ENCODE measurements at regions of chr19 and their contacts with region 1.

Region 1: DNA sequence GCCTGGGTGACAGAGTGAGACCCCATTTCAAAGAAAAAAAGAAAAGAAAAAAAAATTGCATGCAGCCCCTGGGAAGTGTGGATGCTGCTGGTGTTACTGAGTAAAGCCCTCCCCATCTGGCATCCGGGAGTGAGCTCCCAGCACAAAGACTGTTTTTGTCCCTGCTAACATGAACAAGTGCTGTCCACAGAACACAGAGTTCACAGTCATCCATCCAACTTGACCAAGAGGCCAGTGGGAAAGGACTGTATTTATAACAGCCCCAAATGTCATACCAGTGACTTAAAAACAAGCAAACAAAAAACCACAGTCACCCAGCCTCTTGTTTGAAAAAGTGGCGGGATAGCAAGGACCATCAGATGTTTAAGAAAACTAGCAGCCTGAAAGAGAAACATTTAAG is 10.8 kb downstream of the FBXO17 start:
- DNase-seq: no peak
- H3K4me3 ChIP-seq: no peak overlapping the region
- H3K27ac ChIP-seq: no peak overlapping the region
- H3K27me3 ChIP-seq: no peaks in the 10 kb centered on the region
- CTCF ChIP-seq: no peak

Region 2: DNA sequence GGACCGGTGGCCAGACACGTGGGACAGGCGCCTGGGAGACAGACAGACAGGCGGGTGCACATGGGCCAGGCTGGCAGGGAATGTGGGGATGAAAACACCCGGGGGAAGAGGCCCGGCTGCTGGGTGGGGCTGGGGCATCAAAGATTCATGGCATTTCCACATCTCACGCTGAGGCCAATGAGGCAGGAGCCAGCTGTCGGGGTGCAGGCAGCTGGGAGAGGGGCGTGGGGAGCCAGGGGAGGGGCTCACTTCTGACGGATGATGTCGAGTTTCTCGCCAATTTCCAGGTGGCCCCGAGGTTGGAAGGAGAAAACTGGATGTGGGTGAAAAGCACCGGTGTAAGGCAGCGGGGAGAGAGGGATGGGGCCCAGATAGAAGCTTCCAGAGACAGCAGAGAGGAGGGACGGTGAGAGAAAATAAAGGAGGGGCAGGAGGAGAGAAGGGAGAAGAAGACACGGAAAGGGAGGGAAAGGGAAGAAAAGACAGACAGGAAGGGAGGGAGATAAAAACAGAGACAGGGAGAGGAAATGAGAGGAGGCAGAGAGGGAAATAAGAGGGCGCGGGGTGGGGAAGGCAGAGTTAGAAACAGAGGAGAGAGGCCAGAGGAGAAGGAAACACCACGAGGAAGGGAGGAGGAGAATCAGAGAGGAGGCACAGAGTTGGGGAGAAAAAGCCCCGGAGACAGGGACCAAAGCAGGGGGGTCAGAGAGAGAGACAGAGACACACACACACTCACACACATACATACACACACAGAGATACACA is 44.7 kb before region 1 on chr19:
- CTCF ChIA-PET with region 1: no interaction called
- POLR2A ChIA-PET with region 1: no interaction called
- DNase-seq: no peak
- H3K4me3 ChIP-seq: no peak overlapping the region
- H3K27ac ChIP-seq: no peak overlapping the region
- H3K27me3 ChIP-seq: no peaks in the 10 kb centered on the region
- CTCF ChIP-seq: no peak

Region 3: GRCh38 chr19:38975214-38975860 is 10.6 kb after region 1 on chr19 and contains the start of gene FBXO17:
- CTCF ChIA-PET with region 1: interaction called, 17 read pairs
- POLR2A ChIA-PET with region 1: no interaction called
- DNase-seq: no peak
- H3K4me3 ChIP-seq: peak within 1 kb of the TSS; percentile 74
- H3K27ac ChIP-seq: peak within 1 kb of the TSS; percentile 84
- H3K27me3 ChIP-seq: no peaks in the 10 kb centered on the region
- CTCF ChIP-seq: no peak
- polyA plus RNA-seq, gene FBXO17: 10.8 and 11.6 TPM in 2 replicates

Region 4: DNA sequence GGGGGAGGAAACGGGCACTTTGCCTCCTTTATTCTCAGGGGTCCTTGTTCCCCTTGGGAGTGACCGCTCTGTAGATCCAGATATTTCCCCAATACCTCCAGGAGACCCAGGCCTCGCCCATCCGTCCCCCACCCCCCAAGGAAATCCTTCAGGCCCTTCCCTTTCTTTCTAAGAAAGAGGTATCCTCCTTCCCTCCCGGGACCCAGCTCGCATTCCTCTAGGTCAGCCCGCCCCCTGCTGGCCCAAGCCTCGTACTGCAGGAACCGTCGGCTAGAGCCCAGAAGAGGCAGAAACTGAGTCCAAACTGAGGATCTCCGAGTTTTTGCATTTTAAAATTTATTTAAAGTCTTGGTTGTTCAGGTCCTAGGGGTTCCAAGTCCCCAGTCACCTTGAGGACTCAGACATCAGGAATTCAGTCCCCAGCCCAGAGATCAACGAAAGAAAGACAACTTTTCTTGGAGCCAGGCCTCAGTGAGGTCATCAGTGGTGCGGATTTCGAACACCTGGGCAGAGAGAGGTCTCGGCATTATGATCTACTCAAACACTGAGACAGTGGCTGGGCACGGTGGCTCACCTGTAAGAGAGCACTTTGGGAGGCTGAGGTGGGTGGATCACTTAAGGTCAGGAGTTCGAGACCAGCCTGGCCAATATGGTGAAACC is 363.4 kb after region 1 on chr19:
- CTCF ChIA-PET with region 1: interaction called, 11 read pairs
- POLR2A ChIA-PET with region 1: no interaction called
- DNase-seq: peak; percentile 30
- H3K4me3 ChIP-seq: no peak overlapping the region
- H3K27ac ChIP-seq: no peak overlapping the region
- H3K27me3 ChIP-seq: peaks cover 12% of the 10 kb centered on the region
- CTCF ChIP-seq: peak; percentile 97